GM12878 (cell line): ENCODE measurements at regions of chr1 and their contacts with region 1.

Region 1: GRCh38 chr1:184563308-184563707 is 176.5 kb downstream of the C1orf21 start:
- DNase-seq: no peak
- ATAC-seq: no peak; the same call in 2 of the 3 replicates
- H3K4me3 ChIP-seq: no peak overlapping the region
- H3K27ac ChIP-seq: no peak overlapping the region
- H3K4me1 ChIP-seq: peaks cover 5% of the 10 kb centered on the region; the same call in 1 of the 2 replicates
- H3K27me3 ChIP-seq: no peaks in the 10 kb centered on the region; a peak in 2 of 4 replicates
- CTCF ChIP-seq: peak; percentile 26 to 54 (median 35); a peak in 4 of 6 replicates
- EP300 ChIP-seq: no peak
- POLR2A ChIP-seq: no peak
- RAD21 ChIP-seq: peak; percentile 61

Region 2: DNA sequence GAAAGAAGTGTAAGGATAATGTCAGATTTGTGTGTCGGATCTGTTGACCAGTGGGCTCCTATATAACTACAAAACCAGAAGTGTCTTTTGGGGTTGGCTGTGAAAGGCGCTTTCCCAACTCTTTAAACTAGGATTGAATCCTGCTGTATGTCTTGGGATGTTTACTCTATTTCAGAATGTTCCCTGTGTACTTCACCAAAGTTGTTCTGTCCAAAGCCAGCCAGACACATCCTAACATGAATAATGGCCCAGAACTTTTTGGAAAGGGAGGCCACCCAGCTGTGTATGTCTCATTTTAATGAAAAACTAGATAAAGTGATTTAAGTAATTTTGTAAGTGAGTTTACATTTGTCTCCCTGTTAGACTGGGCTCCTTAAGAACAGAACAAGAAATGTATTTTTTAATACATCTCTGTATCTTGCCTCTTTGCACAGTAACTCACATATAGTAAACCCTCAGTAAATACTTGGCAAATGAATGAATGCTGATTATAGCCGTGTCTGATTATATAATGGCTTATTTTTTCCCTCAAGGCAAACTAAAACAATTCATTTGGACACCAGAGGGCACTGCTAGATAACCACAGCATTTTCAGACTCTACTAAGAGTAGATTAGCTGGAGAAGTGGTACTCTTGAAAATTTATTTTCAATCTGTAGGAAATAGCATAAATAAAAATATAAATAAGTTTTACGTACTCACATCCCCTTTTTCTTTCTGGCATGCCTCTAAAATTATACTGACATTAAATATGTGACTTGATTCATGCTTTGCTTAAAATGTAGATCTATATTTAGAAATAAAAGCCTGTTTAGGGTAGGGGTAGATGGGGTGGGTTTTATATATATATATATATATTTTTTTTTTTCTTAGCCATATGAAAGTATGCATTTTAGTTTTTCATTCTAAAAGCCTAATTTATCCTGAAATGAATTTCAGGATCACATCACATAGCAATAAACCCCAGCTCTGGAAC is 488.0 kb before region 1 on chr1:
- CTCF ChIA-PET with region 1: interaction called, 15 read pairs
- POLR2A ChIA-PET with region 1: no interaction called
- RAD21 ChIA-PET with region 1: interaction called, 3 read pairs
- SMC1A ChIA-PET with region 1: interaction called, 4 read pairs
- in situ Hi-C with region 1: no loop called
- intact Hi-C with region 1: loop called (anchors 5 kb)
- DNase-seq: no peak
- ATAC-seq: peak; percentile 91
- H3K4me3 ChIP-seq: no peak overlapping the region
- H3K27ac ChIP-seq: no peak overlapping the region
- H3K4me1 ChIP-seq: no peaks in the 10 kb centered on the region
- H3K27me3 ChIP-seq: no peaks in the 10 kb centered on the region
- CTCF ChIP-seq: peak; percentile 52 to 74 (median 62)
- EP300 ChIP-seq: 0 out of 4 replicates have a peak, but pooled peaks of 1 of the 2 experiments have one; percentile 12
- POLR2A ChIP-seq: no peak
- RAD21 ChIP-seq: peak; percentile 96

Region 3: GRCh38 chr1:184535191-184535970 is 27.9 kb before region 1 on chr1:
- CTCF ChIA-PET with region 1: no interaction called
- POLR2A ChIA-PET with region 1: no interaction called
- RAD21 ChIA-PET with region 1: no interaction called
- SMC1A ChIA-PET with region 1: no interaction called
- in situ Hi-C with region 1: no loop called
- intact Hi-C with region 1: no loop called
- DNase-seq: no peak
- ATAC-seq: no peak
- H3K4me3 ChIP-seq: no peak overlapping the region
- H3K27ac ChIP-seq: no peak overlapping the region
- H3K4me1 ChIP-seq: no peaks in the 10 kb centered on the region
- H3K27me3 ChIP-seq: no peaks in the 10 kb centered on the region; a peak in 1 of 4 replicates
- CTCF ChIP-seq: no peak
- EP300 ChIP-seq: no peak
- POLR2A ChIP-seq: no peak
- RAD21 ChIP-seq: no peak